ENCODE measurements at regions of chr21 and their contacts with region 1.

Region 1: GRCh38 chr21:42818328-42818749 is 61.0 kb downstream of the WDR4 start:
- DNase-seq: peak in 4 of 5 donors; percentile 55 to 70 (median 62)
- H3K4me3 ChIP-seq: no peak overlapping the region
- H3K27ac ChIP-seq: no peak overlapping the region
- H3K4me1 ChIP-seq: no peaks in the 10 kb centered on the region
- H3K27me3 ChIP-seq: no peaks in the 10 kb centered on the region
- CTCF ChIP-seq: peak; percentile 26 to 61 (median 32)
- EP300 ChIP-seq: no peak
- POLR2A ChIP-seq: no peak

Region 2: DNA sequence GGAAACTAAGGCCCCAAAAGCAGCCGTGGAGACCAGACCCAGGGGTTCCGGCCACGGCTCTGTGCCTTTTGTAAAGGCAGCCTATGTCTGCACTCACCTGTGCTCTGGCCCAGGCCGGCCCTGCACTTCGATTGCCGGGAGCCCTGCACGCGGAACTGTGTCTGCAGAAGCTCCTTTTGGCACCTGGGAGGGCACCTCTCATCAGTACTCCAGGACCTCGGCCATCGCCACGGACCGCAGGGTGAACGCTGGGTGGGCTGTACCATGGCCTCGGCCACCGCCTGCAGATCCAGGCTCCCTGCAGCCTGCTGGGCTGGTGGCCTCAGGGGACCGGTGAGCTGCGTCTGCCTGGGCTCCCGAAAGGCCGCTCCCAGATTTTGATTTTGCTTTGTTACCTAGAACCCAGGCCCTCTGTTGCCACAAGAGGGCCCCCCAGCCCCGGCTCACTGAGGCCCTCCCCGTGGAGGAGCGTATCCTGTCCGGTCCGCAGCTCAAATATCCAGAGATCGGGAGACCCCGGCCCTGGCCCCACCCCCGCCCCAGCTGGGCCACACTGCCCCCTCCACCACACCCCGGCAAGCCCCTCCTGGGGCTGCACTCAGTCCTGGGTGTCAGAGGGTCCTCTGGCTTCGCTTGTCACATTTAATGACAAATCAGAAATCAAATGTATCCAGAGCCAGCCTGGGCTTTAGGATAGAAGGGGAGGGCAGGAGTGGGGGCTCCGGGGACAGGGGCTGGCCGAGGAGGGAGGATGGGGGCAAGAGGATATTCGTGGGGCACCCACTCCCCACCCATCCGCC is 225.1 kb before region 1 on chr21:
- intact Hi-C with region 1: loop called in 2 of 4 experiments (anchors 10 kb)
- DNase-seq: peak; percentile 60 to 85 (median 76)
- H3K4me3 ChIP-seq: no peak overlapping the region
- H3K27ac ChIP-seq: no peak overlapping the region
- H3K4me1 ChIP-seq: no peaks in the 10 kb centered on the region
- H3K27me3 ChIP-seq: no peaks in the 10 kb centered on the region
- CTCF ChIP-seq: peak; percentile 47 to 64 (median 57)
- EP300 ChIP-seq: no peak
- POLR2A ChIP-seq: no peak

Region 3: DNA sequence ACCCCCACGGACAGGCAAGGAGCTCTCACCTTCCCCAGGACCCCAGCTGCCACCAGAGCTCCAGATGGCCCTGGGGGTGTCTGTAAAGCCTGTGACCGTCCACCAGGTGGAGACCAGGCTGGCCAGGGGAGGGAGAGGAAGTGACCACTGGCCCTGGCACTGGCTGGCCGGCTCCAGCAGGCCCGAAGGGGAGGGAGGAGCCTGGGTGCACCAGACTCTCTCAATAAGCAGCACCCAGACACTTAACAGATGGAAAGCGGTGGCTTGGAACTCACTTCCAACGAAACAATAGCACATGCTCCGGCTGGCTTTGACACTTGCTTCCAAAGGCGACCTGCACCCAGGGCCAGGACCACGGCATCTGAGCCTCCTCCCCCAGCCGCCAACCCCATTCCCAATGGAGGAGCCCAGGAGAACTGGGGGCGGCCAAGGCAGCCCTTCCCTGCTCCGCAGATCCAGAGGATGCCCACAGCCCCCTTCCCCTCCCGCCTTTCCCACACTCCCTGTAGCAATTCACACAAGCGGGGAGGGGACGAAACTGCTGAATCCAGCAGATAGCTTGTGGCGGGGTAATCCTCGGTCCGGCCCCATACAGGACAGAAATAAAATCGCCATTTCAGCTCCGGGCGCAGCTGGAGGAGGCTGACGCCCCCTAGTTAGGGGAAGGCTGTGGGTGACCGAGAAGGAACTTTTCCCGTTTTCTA is 165.7 kb before region 1 on chr21:
- intact Hi-C with region 1: loop called in 1 of 4 experiments (anchors 10 kb)
- DNase-seq: peak; percentile 52 to 71 (median 59)
- H3K4me3 ChIP-seq: peak overlapping the region; percentile 45
- H3K27ac ChIP-seq: peak overlapping the region; percentile 63 to 71
- H3K4me1 ChIP-seq: peaks cover 2% of the 10 kb centered on the region
- H3K27me3 ChIP-seq: no peaks in the 10 kb centered on the region
- CTCF ChIP-seq: peak in 2 of 3 donors; percentile 11 to 38
- EP300 ChIP-seq: no peak
- POLR2A ChIP-seq: no peak